ENCODE measurements at regions of chr3 and their contacts with region 1.

Region 1: DNA sequence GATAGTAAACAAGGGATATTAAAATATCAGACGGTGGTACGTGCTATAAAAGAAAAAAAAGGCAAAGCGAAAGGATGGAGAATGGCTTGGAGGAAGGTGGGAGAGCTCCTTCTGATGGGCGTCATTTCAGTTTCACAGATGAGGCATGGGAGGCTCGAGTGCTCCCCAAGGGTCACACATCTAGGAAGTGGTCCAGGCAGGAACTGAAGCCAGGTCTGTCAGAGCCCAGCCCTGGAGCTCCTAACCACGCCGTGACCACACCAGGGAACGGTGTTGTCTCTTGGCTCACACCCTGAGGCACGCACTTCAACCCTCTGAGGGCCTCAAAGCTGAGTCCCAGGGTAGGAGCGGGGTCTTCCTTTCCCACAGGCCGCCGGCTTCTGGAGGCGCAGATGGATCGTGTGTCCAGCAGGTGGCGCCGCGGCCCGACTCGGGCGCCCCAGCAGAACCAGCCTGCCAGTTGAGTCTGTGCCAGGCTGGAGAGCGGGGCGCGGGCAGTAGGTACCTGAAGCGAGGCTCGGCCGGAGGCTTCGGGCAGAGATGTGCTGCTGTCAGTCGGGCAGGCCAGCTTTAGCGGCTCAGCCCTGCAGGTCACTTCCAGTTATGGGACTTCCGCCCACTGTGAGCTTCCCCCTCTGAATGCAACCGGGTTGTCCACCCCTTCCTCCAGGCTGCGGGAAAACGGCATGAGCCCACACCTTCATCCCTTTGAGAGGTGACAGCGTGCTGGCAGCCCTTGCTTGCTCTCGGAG is 68.1 kb downstream of the SLC6A1 start:
- DNase-seq: peak in 1 of 2 experiments; percentile 76
- H3K4me3 ChIP-seq: 0 out of 2 replicates have a peak overlapping the region, but pooled peaks have one; percentile 15
- H3K27ac ChIP-seq: no peak overlapping the region
- H3K4me1 ChIP-seq: no peaks in the 10 kb centered on the region
- H3K27me3 ChIP-seq: peaks cover 33% of the 10 kb centered on the region
- CTCF ChIP-seq: peak; percentile 93

Region 2: DNA sequence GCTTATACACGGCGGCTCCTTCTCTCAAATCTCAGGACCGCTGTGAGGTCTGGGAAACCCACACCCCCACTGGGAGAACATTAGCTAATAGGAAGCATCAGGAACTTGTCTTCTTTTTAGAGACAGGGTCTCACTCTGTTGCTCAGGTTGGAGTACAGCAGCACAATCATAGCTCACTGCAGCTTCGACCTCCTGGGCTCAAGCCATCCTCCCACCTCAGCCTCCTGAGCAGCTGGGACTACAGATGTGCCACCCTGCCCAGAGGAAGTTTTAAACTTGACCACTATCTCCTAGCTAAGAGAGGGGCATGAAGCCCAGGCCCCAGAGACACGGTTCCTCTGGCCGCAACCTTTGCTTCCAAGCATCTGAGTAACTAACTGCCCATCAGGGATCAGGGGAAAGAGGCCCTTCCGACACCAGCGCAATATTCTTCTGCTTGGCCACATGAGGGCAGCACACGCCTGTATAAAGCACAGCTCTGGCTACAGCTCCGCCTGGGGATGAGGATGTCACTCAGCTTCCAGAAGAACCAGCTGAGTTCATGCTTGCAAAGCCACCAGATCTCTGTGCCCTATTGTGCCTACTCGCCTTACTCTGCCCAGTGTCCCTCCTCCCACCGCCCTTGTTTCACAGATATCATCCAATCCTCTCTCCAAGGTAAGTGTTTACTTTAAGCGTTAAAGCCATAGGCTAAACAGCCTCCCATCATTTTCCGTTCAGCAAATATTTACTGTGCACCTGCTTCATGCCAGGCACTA is 302.2 kb before region 1 on chr3:
- CTCF ChIA-PET with region 1: interaction called, 5 read pairs
- POLR2A ChIA-PET with region 1: no interaction called
- intact Hi-C with region 1: loop called (anchors 1 kb)
- DNase-seq: peak; percentile 40 to 45
- H3K4me3 ChIP-seq: no peak overlapping the region
- H3K27ac ChIP-seq: no peak overlapping the region
- H3K4me1 ChIP-seq: no peaks in the 10 kb centered on the region
- H3K27me3 ChIP-seq: peaks cover 31% of the 10 kb centered on the region
- CTCF ChIP-seq: peak; percentile 73

Region 3: GRCh38 chr3:10977892-10978510 is 82.7 kb before region 1 on chr3:
- CTCF ChIA-PET with region 1: no interaction called
- POLR2A ChIA-PET with region 1: no interaction called
- intact Hi-C with region 1: loop called (anchors 10 kb)
- DNase-seq: no peak
- H3K4me3 ChIP-seq: no peak overlapping the region
- H3K27ac ChIP-seq: no peak overlapping the region
- H3K4me1 ChIP-seq: peaks cover 5% of the 10 kb centered on the region; the same call in 1 of the 2 replicates
- H3K27me3 ChIP-seq: peaks cover 87% of the 10 kb centered on the region
- CTCF ChIP-seq: no peak

Region 4: GRCh38 chr3:11155341-11156025 is 94.8 kb after region 1 on chr3:
- CTCF ChIA-PET with region 1: no interaction called
- POLR2A ChIA-PET with region 1: no interaction called
- intact Hi-C with region 1: loop called (anchors 1 kb)
- DNase-seq: peak; percentile 62 to 74
- H3K4me3 ChIP-seq: peak overlapping the region; percentile 68
- H3K27ac ChIP-seq: no peak overlapping the region
- H3K4me1 ChIP-seq: peaks cover 12% of the 10 kb centered on the region; the same call in 1 of the 2 replicates
- H3K27me3 ChIP-seq: no peaks in the 10 kb centered on the region
- CTCF ChIP-seq: peak; percentile 76

Region 5: DNA sequence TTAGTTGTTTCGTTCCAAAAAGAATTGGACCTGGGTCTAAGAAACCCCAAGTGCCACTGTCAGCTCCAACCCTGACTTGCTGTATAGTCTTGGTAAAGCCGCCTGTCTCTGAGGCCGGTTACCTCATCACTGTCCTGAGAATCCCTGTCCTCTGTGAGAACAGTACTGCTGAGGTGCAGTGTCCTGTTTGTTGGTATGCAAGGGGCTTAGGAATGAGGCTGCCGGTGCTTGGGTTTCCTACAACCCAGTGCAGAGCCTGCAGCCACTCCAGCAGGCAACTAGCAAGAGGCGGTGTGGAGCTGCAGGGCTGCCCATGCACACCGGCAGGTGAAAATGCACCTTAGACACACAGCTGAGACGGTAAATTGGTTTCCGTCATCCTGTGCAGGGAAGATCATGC is 159.6 kb after region 1 on chr3:
- CTCF ChIA-PET with region 1: interaction called, 15 read pairs
- POLR2A ChIA-PET with region 1: no interaction called
- intact Hi-C with region 1: no loop called
- DNase-seq: no peak
- H3K4me3 ChIP-seq: no peak overlapping the region
- H3K27ac ChIP-seq: no peak overlapping the region
- H3K4me1 ChIP-seq: peaks cover 17% of the 10 kb centered on the region
- H3K27me3 ChIP-seq: no peaks in the 10 kb centered on the region
- CTCF ChIP-seq: no peak

Region 6: GRCh38 chr3:11335056-11335608 is 274.5 kb after region 1 on chr3:
- CTCF ChIA-PET with region 1: interaction called, 9 read pairs
- POLR2A ChIA-PET with region 1: no interaction called
- intact Hi-C with region 1: loop called (anchors 1 kb)
- DNase-seq: peak; percentile 31 to 52
- H3K4me3 ChIP-seq: no peak overlapping the region
- H3K27ac ChIP-seq: no peak overlapping the region
- H3K4me1 ChIP-seq: peaks cover 8% of the 10 kb centered on the region
- H3K27me3 ChIP-seq: no peaks in the 10 kb centered on the region
- CTCF ChIP-seq: peak; percentile 83